MCF 10A (cell line): ENCODE measurements at regions of chr4 and their contacts with region 1.

Region 1: GRCh38 chr4:118772081-118772766 is 63.7 kb downstream of the SEC24D start:
- DNase-seq: peak; percentile 56
- H3K4me3 Mint-ChIP-seq: no peak overlapping the region
- H3K27ac Mint-ChIP-seq: no peak overlapping the region
- H3K4me1 Mint-ChIP-seq: peaks cover 27% of the 10 kb centered on the region
- H3K27me3 Mint-ChIP-seq: no peaks in the 10 kb centered on the region
- CTCF ChIP-seq: peak; percentile 39

Region 2: GRCh38 chr4:117957571-117957970 is 814.7 kb before region 1 on chr4:
- CTCF ChIA-PET with region 1: no interaction called
- POLR2A ChIA-PET with region 1: no interaction called
- intact Hi-C with region 1: no loop called
- DNase-seq: no peak
- H3K4me3 Mint-ChIP-seq: no peak overlapping the region
- H3K27ac Mint-ChIP-seq: no peak overlapping the region
- H3K4me1 Mint-ChIP-seq: no peaks in the 10 kb centered on the region
- H3K27me3 Mint-ChIP-seq: no peaks in the 10 kb centered on the region
- CTCF ChIP-seq: no peak

Region 3: DNA sequence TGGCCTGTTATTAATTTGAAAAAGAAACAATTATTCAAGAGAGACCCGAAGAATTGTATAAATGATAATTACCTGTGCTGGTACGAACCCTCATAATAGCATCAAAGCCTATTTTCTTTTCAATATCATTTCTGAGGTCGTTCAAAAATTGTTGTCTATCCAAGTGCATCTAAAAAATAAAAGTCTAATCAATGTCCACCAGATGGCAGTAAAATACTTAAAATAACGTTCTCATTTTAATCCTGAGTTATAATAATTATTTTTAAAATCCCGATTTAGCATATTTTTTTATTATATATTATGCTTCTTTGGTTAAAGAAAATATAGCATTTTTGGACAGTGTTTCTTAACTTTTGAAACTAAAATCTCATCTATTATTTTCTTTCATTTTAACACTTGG is 31.4 kb before region 1 on chr4:
- CTCF ChIA-PET with region 1: interaction called, 20 read pairs
- POLR2A ChIA-PET with region 1: interaction called, 3 read pairs
- intact Hi-C with region 1: no loop called
- DNase-seq: peak; percentile 23
- H3K4me3 Mint-ChIP-seq: no peak overlapping the region
- H3K27ac Mint-ChIP-seq: no peak overlapping the region
- H3K4me1 Mint-ChIP-seq: no peaks in the 10 kb centered on the region
- H3K27me3 Mint-ChIP-seq: no peaks in the 10 kb centered on the region
- CTCF ChIP-seq: peak; percentile 19

Region 4: DNA sequence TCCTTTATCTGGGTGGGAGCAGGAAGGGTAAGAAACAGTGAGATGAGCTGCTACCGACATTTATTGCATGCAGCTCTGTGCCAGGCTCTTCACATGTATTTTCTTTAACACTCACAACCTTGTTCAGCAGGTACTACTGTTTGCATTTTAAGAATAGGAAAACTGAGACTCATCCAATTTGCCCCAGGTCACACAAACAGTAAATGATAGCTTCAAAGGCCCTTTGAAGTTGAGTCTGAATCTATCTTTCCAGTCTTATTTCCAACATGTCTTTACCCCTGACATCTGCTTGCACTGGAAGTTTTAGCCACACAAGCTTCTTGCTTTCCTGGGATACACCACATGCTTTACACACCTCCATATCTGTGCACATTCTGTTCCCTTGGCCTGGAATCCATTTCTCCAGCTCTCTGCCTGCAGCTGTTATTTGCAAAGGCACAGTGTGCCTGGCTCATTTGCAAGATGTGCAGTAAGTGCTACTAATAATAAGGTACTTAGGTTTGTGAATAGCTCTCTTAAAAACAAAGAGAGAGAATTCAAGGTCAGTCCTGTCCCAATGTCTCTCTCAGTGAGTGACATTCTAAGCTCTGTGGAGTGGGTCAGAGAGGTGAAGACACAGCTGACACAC is 25.8 kb before region 1 on chr4:
- CTCF ChIA-PET with region 1: interaction called, 20 read pairs
- POLR2A ChIA-PET with region 1: interaction called, 3 read pairs
- intact Hi-C with region 1: no loop called
- DNase-seq: no peak
- H3K4me3 Mint-ChIP-seq: no peak overlapping the region
- H3K27ac Mint-ChIP-seq: no peak overlapping the region
- H3K4me1 Mint-ChIP-seq: no peaks in the 10 kb centered on the region
- H3K27me3 Mint-ChIP-seq: no peaks in the 10 kb centered on the region
- CTCF ChIP-seq: no peak

Region 5: GRCh38 chr4:118760493-118760892 is 11.7 kb before region 1 on chr4:
- CTCF ChIA-PET with region 1: interaction called, 14 read pairs
- POLR2A ChIA-PET with region 1: interaction called, 5 read pairs
- intact Hi-C with region 1: no loop called
- DNase-seq: no peak
- H3K4me3 Mint-ChIP-seq: no peak overlapping the region
- H3K27ac Mint-ChIP-seq: no peak overlapping the region
- H3K4me1 Mint-ChIP-seq: peaks cover 20% of the 10 kb centered on the region
- H3K27me3 Mint-ChIP-seq: no peaks in the 10 kb centered on the region
- CTCF ChIP-seq: no peak

Region 6: DNA sequence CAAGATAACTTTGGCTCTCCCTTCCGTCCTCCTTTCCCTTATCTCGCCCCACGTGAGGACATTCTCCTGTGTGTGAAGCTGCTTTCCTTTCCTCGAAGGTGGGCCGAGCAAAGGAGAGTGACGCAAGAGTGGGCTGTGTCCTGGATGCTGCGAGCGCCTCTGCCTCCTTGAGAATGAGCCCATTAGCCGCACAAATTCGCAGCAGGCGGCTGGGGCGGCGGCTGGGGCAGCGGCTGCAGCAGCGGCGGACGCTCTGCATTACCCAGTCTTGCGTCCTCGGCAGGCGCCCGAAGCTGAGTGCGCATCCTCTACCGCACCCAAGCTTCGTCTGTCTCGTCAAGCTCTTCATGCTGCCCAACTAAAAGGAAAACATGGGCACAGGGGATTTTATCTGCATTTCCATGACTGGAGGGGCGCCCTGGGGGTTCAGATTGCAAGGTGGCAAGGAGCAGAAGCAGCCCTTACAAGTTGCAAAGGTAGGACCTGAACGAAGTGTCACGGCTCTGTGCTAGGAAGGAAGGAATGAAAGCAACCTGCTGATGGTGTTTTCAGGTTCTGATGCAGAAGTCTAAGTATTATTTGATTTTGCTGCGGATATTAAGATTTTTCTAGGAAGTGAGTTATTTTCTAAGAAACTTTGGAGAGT is 116.6 kb after region 1 on chr4 and contains the start of gene SYNPO2:
- CTCF ChIA-PET with region 1: interaction called, 121 read pairs
- POLR2A ChIA-PET with region 1: interaction called, 7 read pairs
- intact Hi-C with region 1: loop called (anchors 1 kb)
- DNase-seq: peak; percentile 63
- H3K4me3 Mint-ChIP-seq: peak within 1 kb of the TSS; percentile 67
- H3K27ac Mint-ChIP-seq: no peak within 1 kb of the TSS
- H3K4me1 Mint-ChIP-seq: peaks cover 14% of the 10 kb centered on the region
- H3K27me3 Mint-ChIP-seq: no peaks in the 10 kb centered on the region
- CTCF ChIP-seq: no peak
- total RNA-seq, gene SYNPO2: 0.42 and 0.61 TPM in 2 replicates

Region 7: GRCh38 chr4:118968005-118968404 is 195.8 kb after region 1 on chr4:
- CTCF ChIA-PET with region 1: interaction called, 85 read pairs
- POLR2A ChIA-PET with region 1: interaction called, 4 read pairs
- intact Hi-C with region 1: loop called (anchors 1 kb)
- DNase-seq: peak; percentile 60
- H3K4me3 Mint-ChIP-seq: no peak overlapping the region
- H3K27ac Mint-ChIP-seq: peak overlapping the region; percentile 74
- H3K4me1 Mint-ChIP-seq: peaks cover 15% of the 10 kb centered on the region
- H3K27me3 Mint-ChIP-seq: no peaks in the 10 kb centered on the region
- CTCF ChIP-seq: no peak

Region 8: GRCh38 chr4:118974758-118975157 is 202.5 kb after region 1 on chr4:
- CTCF ChIA-PET with region 1: interaction called, 85 read pairs
- POLR2A ChIA-PET with region 1: interaction called, 3 read pairs
- intact Hi-C with region 1: loop called (anchors 1 kb)
- DNase-seq: no peak
- H3K4me3 Mint-ChIP-seq: no peak overlapping the region
- H3K27ac Mint-ChIP-seq: no peak overlapping the region
- H3K4me1 Mint-ChIP-seq: peaks cover 7% of the 10 kb centered on the region
- H3K27me3 Mint-ChIP-seq: no peaks in the 10 kb centered on the region
- CTCF ChIP-seq: no peak